ENCODE measurements at regions of chr15 and their contacts with region 1.

Region 1: DNA sequence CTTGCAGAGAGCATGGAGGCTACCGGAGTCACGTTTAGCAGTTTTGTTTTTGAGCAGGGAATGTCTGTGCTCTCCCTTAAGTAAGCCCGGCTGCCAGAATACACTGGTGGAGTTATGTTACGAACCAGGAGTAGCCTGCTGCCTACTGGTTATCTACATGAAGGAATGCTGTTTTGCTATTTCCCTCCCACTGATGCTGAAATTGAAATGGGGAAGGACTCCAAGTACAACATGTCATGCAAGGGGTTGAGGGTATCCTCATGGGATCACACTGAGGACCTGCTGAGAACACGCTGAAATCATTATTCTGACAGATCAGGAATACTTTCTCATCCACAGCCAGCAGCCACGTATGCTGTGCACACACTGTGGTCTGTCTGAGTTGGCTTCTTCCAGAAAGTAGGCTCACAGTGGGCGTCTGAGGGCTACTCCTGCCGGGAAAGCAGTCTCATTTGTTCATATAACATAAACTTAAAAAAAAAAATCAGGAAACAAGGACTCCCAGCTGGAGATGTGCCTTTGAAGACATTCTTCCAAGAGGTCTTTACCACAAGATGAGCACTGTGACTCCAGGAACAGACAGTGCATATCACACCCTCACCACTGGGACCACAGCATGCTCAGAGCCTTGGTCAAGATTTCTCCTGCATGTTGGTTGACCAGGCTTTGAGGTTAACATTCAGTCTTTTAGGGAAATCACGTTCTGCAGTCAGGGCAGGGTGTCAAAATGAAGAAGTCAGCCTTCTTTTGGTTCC is 300.4 kb upstream of the RASGRP1 start:
- DNase-seq: peak; percentile 83
- ATAC-seq: peak; percentile 85
- H3K4me3 ChIP-seq: no peak overlapping the region
- H3K27ac ChIP-seq: peak overlapping the region; percentile 90
- H3K4me1 ChIP-seq: peaks cover 25% of the 10 kb centered on the region
- H3K27me3 ChIP-seq: no peaks in the 10 kb centered on the region
- CTCF ChIP-seq: no peak
- POLR2A ChIP-seq: no peak
- RAD21 ChIP-seq: peak; percentile 22; the same call in 1 of the 2 replicates

Region 2: DNA sequence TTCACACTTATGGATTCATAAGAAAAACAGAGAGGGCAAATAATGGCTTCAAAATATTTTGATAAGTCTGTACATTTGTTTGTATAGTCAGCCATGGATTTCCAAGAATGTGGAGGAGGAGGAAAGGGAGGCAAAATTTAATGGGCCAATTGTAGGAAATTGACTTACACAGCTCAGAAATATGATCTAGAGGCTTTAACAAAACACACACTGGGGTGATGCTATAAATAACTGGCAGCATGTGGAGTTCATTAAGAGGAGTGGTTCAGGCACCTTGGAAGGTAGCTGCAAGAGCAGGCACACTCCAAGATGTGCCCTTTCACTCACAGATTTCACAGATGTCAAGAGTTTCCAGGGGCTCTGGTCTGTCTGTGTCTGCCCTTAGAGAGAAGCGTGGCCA is 107.0 kb before region 1 on chr15:
- CTCF ChIA-PET with region 1: no interaction called
- POLR2A ChIA-PET with region 1: no interaction called
- dilution Hi-C with region 1: no loop called
- in situ Hi-C with region 1: no loop called
- intact Hi-C with region 1: no loop called
- DNase-seq: peak; percentile 76
- ATAC-seq: peak; percentile 95
- H3K4me3 ChIP-seq: no peak overlapping the region
- H3K27ac ChIP-seq: no peak overlapping the region
- H3K4me1 ChIP-seq: peaks cover 4% of the 10 kb centered on the region
- H3K27me3 ChIP-seq: peaks cover 10% of the 10 kb centered on the region
- CTCF ChIP-seq: no peak
- POLR2A ChIP-seq: no peak
- RAD21 ChIP-seq: no peak

Region 3: DNA sequence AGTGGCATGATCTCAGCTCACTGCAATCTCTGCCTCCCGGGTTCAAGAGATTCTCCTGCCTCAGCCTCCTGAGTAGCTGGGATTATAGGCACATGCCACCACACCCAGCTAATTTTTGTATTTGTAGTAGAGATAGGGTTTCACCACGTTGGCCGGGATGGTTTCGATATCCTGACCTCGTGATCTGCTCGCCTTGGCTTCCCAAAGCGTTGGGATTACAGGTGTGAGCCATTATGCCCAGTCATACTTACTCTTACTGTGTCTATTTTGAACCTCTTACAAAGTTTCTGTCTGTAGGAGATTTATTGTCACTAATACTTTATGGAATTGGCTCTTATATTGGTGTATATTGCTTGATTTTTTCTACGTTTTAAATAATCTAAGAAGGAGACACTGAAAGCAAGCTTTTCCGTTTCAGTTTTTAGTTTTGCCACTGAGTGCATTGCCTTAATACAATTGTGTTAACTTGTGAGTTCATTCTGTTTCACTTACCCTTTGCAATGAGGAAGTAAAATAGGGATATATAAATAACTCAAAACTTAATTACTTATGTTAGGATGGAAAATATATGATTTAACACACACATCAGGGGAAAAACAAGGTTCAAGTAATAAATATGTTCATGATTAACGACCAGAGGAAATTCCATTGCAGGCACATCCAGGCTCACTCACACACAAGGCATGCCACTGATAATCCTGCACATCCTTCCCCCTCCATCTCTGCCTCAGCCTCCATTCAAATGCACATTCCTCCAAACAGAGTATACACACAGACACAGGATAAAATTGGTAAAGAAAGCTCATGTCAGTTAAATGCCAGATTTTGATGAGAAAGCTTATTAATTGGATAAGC is 21.0 kb before region 1 on chr15:
- CTCF ChIA-PET with region 1: interaction called, 7 read pairs
- POLR2A ChIA-PET with region 1: no interaction called
- dilution Hi-C with region 1: no loop called
- in situ Hi-C with region 1: no loop called
- intact Hi-C with region 1: loop called (anchors 2 kb)
- DNase-seq: peak; percentile 81
- ATAC-seq: peak; percentile 88
- H3K4me3 ChIP-seq: no peak overlapping the region
- H3K27ac ChIP-seq: peak overlapping the region; percentile 99
- H3K4me1 ChIP-seq: peaks cover 22% of the 10 kb centered on the region
- H3K27me3 ChIP-seq: no peaks in the 10 kb centered on the region
- CTCF ChIP-seq: no peak
- POLR2A ChIP-seq: no peak
- RAD21 ChIP-seq: no peak

Region 4: GRCh38 chr15:38894243-38894948 is 29.4 kb after region 1 on chr15:
- CTCF ChIA-PET with region 1: no interaction called
- POLR2A ChIA-PET with region 1: no interaction called
- dilution Hi-C with region 1: no loop called
- in situ Hi-C with region 1: no loop called
- intact Hi-C with region 1: no loop called
- DNase-seq: peak; percentile 96
- ATAC-seq: peak; percentile 71
- H3K4me3 ChIP-seq: no peak overlapping the region
- H3K27ac ChIP-seq: peak overlapping the region; percentile 100; the same call in 1 of the 2 replicates
- H3K4me1 ChIP-seq: peaks cover 21% of the 10 kb centered on the region
- H3K27me3 ChIP-seq: no peaks in the 10 kb centered on the region
- CTCF ChIP-seq: no peak
- POLR2A ChIP-seq: no peak
- RAD21 ChIP-seq: no peak

Region 5: DNA sequence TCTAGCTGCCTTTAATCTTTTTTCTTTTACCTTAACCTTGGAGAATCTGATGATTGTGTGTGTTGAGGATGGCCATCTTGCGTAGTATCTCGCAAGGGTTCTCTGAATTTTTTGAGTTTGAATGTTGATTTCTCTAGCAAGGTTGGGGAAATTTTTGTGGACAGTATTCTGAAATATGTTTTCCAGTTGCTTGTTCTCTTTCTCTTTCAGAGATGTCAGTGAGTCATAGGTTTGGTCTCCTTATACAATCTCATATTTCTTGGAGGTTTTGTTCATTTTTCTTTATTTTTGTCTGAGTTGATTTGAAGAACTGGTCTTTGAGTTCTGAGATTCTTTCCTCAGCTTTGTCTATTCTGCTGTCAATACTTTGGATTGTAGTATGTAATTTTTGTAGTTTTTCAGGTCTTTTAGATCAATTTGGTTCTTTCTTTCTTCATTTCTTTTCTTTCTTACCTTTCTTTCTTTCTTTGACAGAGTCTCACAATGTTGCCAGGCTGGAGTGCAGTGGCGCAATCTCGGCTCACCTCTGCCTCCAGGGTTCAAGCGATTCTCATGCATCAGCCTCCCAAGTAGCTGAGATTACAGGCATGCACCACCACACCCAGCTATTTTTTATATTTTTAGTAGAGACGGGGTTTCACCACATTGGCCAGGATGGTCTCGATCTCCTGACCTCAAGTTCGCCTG is 66.0 kb after region 1 on chr15:
- CTCF ChIA-PET with region 1: no interaction called
- POLR2A ChIA-PET with region 1: no interaction called
- dilution Hi-C with region 1: no loop called
- in situ Hi-C with region 1: no loop called
- intact Hi-C with region 1: loop called (anchors 1 kb)
- DNase-seq: peak; percentile 58
- ATAC-seq: peak; percentile 83
- H3K4me3 ChIP-seq: no peak overlapping the region
- H3K27ac ChIP-seq: peak overlapping the region; percentile 81; the same call in 1 of the 2 replicates
- H3K4me1 ChIP-seq: peaks cover 13% of the 10 kb centered on the region
- H3K27me3 ChIP-seq: no peaks in the 10 kb centered on the region
- CTCF ChIP-seq: no peak
- POLR2A ChIP-seq: no peak
- RAD21 ChIP-seq: no peak